CD4-positive, alpha-beta memory T cell (primary cell): ENCODE measurements at regions of chr13 and their contacts with region 1.

Region 1: DNA sequence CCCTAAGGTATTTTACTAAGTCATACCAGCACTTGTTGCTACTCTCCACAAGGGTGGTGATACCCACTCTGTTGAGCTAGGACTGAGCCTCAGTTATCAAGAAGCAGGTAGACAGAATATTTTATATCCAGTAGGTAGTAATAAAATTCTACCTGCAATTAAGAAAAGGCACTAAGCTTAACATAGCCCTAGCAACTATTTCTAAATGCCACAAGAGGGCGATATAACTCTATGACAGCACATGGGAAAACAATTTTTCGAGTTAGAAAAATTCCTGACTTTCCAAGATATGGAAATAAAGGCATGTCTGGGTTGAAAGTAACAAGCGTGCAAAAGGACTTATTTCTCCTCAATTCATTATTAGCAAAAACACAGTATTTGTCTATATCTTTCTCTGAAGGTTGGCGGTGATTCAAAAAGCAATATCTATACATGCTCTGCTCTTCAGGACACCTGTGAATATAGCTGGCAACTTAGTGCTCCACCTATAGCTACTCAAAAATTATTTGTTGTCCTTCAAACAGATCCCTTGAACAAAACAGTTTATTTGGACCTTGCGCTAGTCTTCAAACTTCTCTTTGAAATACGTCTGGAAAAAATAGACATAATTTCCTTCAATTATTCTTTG is 14.7 kb downstream of the CCDC169 start:
- DNase-seq: peak in 4 of 5 donors; percentile 9 to 21 (median 14)
- H3K4me3 ChIP-seq: no peak overlapping the region
- H3K4me3 Mint-ChIP-seq: no peak overlapping the region
- H3K27ac ChIP-seq: no peak overlapping the region
- H3K27ac Mint-ChIP-seq: no peak overlapping the region
- H3K4me1 ChIP-seq: no peaks in the 10 kb centered on the region
- H3K4me1 Mint-ChIP-seq: no peaks in the 10 kb centered on the region
- H3K27me3 ChIP-seq: no peaks in the 10 kb centered on the region
- H3K27me3 Mint-ChIP-seq: peaks cover 9 to 11% of the 10 kb centered on the region in 2 donors

Region 2: DNA sequence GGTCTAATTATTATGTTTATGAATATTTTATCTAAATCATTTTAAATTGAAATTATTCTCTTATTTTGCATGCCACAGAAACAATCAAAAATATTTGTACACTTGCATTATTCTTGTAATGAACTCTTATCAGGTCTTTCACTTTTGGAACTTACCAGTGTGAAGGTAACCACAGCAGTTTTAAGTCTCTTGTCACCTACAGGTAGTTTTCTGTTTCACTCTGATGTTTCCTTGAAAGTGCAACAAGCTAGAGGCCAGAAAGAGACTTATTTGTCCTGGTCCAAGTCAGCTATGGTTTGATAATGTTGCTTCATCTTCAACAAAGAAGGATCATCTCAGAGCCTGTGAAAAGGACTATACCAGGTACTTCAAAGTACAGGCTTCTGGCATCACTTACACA is 1474.3 kb before region 1 on chr13:
- CTCF ChIA-PET with region 1: no interaction called
- POLR2A ChIA-PET with region 1: no interaction called
- intact Hi-C with region 1: no loop called
- DNase-seq: no peak
- H3K4me3 ChIP-seq: no peak overlapping the region
- H3K4me3 Mint-ChIP-seq: no peak overlapping the region
- H3K27ac ChIP-seq: no peak overlapping the region
- H3K27ac Mint-ChIP-seq: no peak overlapping the region
- H3K4me1 ChIP-seq: no peaks in the 10 kb centered on the region
- H3K4me1 Mint-ChIP-seq: no peaks in the 10 kb centered on the region
- H3K27me3 ChIP-seq: no peaks in the 10 kb centered on the region
- H3K27me3 Mint-ChIP-seq: no peaks in the 10 kb centered on the region

Region 3: DNA sequence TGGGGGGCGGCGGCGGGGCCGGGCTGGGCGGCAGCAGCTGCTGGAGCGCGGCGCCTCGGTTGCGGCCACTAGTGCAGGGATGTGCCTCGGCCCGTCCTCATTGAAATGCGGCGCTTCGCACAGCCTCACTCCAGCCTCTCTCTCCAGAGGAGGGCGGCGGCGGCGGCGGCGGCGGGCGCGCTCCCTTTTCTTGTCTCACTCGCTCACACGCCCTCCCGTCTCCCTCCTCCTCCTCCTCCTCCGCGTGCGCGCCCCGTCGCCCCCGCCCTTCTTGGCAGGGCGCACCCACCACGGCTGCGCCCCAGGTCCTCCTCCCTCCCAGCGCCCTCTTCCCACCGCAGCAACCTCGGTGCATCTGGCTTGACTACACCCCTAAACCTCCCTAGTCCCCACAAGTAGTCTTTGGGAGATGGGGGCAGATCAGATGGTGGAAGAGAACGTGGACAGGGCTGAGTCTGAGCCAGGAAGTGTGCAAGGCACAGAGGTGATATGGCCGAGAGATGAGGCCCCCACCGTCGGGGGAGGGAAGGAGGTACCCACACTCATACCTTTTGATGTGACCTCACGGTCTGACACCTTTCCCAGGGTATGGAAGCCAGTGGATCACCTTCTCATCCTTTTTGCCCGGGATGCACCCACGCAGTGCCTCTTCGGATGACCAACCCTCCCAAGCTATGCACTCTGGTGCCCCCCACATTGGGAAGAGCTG is 151.6 kb before region 1 on chr13 and contains the start of gene DCLK1:
- CTCF ChIA-PET with region 1: no interaction called
- POLR2A ChIA-PET with region 1: no interaction called
- intact Hi-C with region 1: no loop called
- DNase-seq: no peak
- H3K4me3 ChIP-seq: no peak within 1 kb of the TSS
- H3K4me3 Mint-ChIP-seq: no peak within 1 kb of the TSS
- H3K27ac ChIP-seq: no peak within 1 kb of the TSS
- H3K27ac Mint-ChIP-seq: no peak within 1 kb of the TSS
- H3K4me1 ChIP-seq: no peaks in the 10 kb centered on the region
- H3K4me1 Mint-ChIP-seq: no peaks in the 10 kb centered on the region
- H3K27me3 ChIP-seq: no peaks in the 10 kb centered on the region
- H3K27me3 Mint-ChIP-seq: peaks cover 12 to 27% of the 10 kb centered on the region in 2 donors
- total RNA-seq, gene DCLK1: not detected

Region 4: GRCh38 chr13:36261976-36262375 is 21.0 kb before region 1 on chr13:
- CTCF ChIA-PET with region 1: no interaction called
- POLR2A ChIA-PET with region 1: no interaction called
- intact Hi-C with region 1: no loop called
- DNase-seq: no peak
- H3K4me3 ChIP-seq: no peak overlapping the region
- H3K4me3 Mint-ChIP-seq: no peak overlapping the region
- H3K27ac ChIP-seq: no peak overlapping the region
- H3K27ac Mint-ChIP-seq: no peak overlapping the region
- H3K4me1 ChIP-seq: no peaks in the 10 kb centered on the region
- H3K4me1 Mint-ChIP-seq: no peaks in the 10 kb centered on the region
- H3K27me3 ChIP-seq: no peaks in the 10 kb centered on the region
- H3K27me3 Mint-ChIP-seq: peaks cover 2 to 7% of the 10 kb centered on the region in 2 donors

Region 5: GRCh38 chr13:36736119-36736726 is 453.3 kb after region 1 on chr13:
- CTCF ChIA-PET with region 1: interaction called, 10 read pairs
- POLR2A ChIA-PET with region 1: no interaction called
- intact Hi-C with region 1: no loop called
- DNase-seq: peak; percentile 10 to 39 (median 22)
- H3K4me3 ChIP-seq: no peak overlapping the region
- H3K4me3 Mint-ChIP-seq: no peak overlapping the region
- H3K27ac ChIP-seq: no peak overlapping the region
- H3K27ac Mint-ChIP-seq: no peak overlapping the region
- H3K4me1 ChIP-seq: no peaks in the 10 kb centered on the region
- H3K4me1 Mint-ChIP-seq: no peaks in the 10 kb centered on the region
- H3K27me3 ChIP-seq: no peaks in the 10 kb centered on the region
- H3K27me3 Mint-ChIP-seq: peaks cover 2 to 4% of the 10 kb centered on the region in 2 donors

Region 6: GRCh38 chr13:37306778-37307544 is 1024.0 kb after region 1 on chr13:
- CTCF ChIA-PET with region 1: no interaction called
- POLR2A ChIA-PET with region 1: no interaction called
- intact Hi-C with region 1: no loop called
- DNase-seq: no peak
- H3K4me3 ChIP-seq: no peak overlapping the region
- H3K4me3 Mint-ChIP-seq: no peak overlapping the region
- H3K27ac ChIP-seq: no peak overlapping the region
- H3K27ac Mint-ChIP-seq: no peak overlapping the region
- H3K4me1 ChIP-seq: no peaks in the 10 kb centered on the region
- H3K4me1 Mint-ChIP-seq: no peaks in the 10 kb centered on the region
- H3K27me3 ChIP-seq: no peaks in the 10 kb centered on the region
- H3K27me3 Mint-ChIP-seq: no peaks in the 10 kb centered on the region